Sciatic nerve (tissue), 2 donors: ENCODE measurements at regions of chr19 and their contacts with region 1.

Region 1: GRCh38 chr19:49436369-49437017 is 4.8 kb downstream of the SLC17A7 start:
- DNase-seq: no peak
- ATAC-seq: no peak

Region 2: GRCh38 chr19:49224856-49225255 is 211.6 kb before region 1 on chr19:
- intact Hi-C with region 1: loop called (anchors 5 kb)
- DNase-seq: no peak
- ATAC-seq: no peak

Region 3: DNA sequence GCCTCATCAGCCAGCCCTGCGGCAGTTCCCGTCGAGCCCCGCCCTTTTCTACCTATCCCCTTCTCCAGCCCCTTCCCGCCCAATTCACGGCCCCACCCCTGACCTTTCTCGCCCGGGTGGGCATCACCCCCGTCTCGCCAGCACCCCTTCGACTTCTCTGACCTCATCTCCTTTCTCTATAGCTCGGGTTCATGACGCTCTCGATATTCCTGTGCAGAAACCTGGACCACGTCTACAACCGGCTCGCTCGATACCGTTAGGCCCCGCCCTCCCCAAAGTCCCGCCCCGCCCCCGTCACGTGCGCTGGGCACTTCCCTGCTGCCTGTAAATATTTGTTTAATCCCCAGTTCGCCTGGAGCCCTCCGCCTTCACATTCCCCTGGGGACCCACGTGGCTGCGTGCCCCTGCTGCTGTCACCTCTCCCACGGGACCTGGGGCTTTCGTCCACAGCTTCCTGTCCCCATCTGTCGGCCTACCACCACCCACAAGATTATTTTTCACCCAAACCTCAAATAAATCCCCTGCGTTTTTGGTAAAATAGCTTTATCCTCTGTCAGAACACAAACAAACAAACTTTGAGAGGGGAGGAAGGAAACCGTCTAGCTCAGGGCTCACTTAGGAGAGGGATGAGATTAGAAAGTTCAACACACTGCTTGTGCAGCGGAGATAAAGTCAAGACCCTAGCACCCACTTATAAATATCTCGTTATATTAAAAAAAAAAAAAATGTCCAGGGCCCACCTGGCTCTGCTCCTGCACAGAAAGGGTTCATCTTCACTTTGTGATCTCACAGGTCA is 96.2 kb before region 1 on chr19:
- intact Hi-C with region 1: no loop called
- DNase-seq: peak; percentile 83
- ATAC-seq: peak; percentile 76

Region 4: GRCh38 chr19:49512970-49513745 is 76.7 kb after region 1 on chr19:
- intact Hi-C with region 1: no loop called
- DNase-seq: peak; percentile 84
- ATAC-seq: peak; percentile 84

Region 5: GRCh38 chr19:49533551-49534488 is 97.3 kb after region 1 on chr19:
- intact Hi-C with region 1: no loop called
- DNase-seq: peak; percentile 91
- ATAC-seq: peak; percentile 95